GM12878 (cell line): ENCODE measurements at regions of chr7 and their contacts with region 1.

Region 1: DNA sequence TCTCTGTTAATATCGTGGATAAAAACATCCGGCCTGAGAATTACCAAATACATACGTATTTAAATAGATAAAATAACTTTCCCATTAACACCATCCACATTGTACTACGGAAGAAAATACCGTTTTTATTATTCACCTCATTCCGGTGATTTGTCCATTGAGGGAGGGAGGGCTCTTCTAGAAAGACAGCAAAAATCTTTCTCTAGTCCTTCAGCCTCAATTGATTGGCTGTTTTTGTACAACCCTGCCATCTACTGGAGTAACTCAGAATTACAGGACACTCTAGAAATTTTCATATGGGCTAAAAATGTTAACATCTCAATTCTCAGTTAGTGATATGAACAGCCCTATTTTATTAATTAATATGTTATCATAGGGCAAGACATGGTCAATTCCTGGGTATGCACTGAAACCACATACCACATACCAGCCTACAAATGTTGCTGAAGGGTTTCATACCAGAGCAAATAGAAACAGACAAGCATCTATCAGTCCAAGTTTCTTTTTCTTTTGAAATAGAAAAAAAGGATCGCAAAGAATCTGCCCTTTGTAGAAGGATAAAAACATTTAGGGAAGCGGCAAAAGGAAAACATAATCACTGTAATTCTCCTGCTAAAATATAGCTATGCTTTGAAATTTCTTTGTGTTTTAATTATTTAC is 55.8 kb upstream of the CDCA7L start:
- DNase-seq: peak; percentile 13
- ATAC-seq: peak; percentile 80
- H3K4me3 ChIP-seq: no peak overlapping the region
- H3K27ac ChIP-seq: no peak overlapping the region
- H3K4me1 ChIP-seq: no peaks in the 10 kb centered on the region
- H3K27me3 ChIP-seq: 0 out of 4 replicates have a peak, but pooled peaks cover 0 to 1% of the 10 kb centered on the region in 2 experiments
- CTCF ChIP-seq: peak; percentile 58 to 83 (median 70)
- EP300 ChIP-seq: no peak
- POLR2A ChIP-seq: no peak
- RAD21 ChIP-seq: peak; percentile 95

Region 2: DNA sequence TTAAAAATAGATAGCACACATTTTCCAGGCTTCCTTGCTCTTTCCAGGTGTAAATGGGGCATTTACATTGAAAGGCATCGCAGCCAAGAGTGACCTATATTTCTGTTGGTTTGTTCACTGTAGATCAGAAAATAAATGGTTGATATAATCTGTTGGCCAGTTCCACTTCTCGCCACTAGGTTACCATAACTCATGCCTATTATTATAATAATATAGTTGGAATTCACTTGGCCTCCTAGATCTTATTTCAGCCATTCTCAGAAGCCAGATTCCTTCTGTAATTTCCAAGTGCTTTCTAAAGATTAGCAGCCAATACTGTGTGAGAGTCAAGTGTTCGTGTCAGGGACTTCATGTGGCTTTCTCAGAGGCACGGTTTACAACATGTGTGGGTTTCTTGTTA is 279.1 kb before region 1 on chr7:
- CTCF ChIA-PET with region 1: no interaction called
- POLR2A ChIA-PET with region 1: no interaction called
- RAD21 ChIA-PET with region 1: no interaction called
- SMC1A ChIA-PET with region 1: no interaction called
- in situ Hi-C with region 1: no loop called
- intact Hi-C with region 1: loop called (anchors 5 kb)
- DNase-seq: no peak
- ATAC-seq: no peak
- H3K4me3 ChIP-seq: no peak overlapping the region
- H3K27ac ChIP-seq: no peak overlapping the region
- H3K4me1 ChIP-seq: no peaks in the 10 kb centered on the region
- H3K27me3 ChIP-seq: no peaks in the 10 kb centered on the region; a peak in 1 of 4 replicates
- CTCF ChIP-seq: peak in 2 of 3 experiments; percentile 20 to 28; a peak in 1 of 6 replicates
- EP300 ChIP-seq: no peak
- POLR2A ChIP-seq: no peak
- RAD21 ChIP-seq: no peak

Region 3: DNA sequence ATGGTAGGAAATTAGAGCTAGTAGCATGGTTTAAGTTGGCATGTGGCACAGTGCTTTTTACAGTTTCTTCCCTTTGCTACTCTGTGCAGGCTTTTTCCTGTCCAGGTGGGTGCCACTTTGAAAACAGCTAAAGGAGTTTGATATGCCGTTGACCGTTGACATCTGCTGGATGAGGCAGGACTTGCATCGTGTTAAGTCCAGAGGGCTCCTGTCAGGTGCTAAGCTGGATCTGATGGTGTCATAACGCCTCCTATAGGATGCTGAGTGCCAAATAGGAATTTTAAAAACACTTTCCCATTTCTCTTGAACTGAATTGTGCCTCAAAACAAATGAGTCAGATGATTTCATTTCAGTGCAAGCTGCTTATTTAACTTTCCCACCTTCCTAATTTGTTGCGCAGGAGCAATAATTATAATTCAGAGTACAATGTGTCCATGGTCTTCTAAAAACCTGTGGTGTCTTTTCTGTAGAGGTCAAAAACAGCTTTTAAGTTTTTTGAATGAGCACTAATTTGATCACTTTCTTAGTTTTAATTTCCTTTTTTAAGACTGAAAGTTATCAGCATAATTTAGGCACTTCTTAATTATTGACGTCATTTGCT is 234.1 kb before region 1 on chr7:
- CTCF ChIA-PET with region 1: interaction called, 3 read pairs
- POLR2A ChIA-PET with region 1: no interaction called
- RAD21 ChIA-PET with region 1: interaction called, 6 read pairs
- SMC1A ChIA-PET with region 1: interaction called, 6 read pairs
- in situ Hi-C with region 1: no loop called
- intact Hi-C with region 1: loop called (anchors 1 kb)
- DNase-seq: peak; percentile 26
- ATAC-seq: peak; percentile 91
- H3K4me3 ChIP-seq: no peak overlapping the region
- H3K27ac ChIP-seq: no peak overlapping the region
- H3K4me1 ChIP-seq: no peaks in the 10 kb centered on the region
- H3K27me3 ChIP-seq: 0 out of 4 replicates have a peak, but pooled peaks cover 0 to 2% of the 10 kb centered on the region in 2 experiments
- CTCF ChIP-seq: peak; percentile 59 to 81 (median 76); a peak in 5 of 6 replicates
- EP300 ChIP-seq: no peak
- POLR2A ChIP-seq: no peak
- RAD21 ChIP-seq: peak; percentile 92

Region 4: DNA sequence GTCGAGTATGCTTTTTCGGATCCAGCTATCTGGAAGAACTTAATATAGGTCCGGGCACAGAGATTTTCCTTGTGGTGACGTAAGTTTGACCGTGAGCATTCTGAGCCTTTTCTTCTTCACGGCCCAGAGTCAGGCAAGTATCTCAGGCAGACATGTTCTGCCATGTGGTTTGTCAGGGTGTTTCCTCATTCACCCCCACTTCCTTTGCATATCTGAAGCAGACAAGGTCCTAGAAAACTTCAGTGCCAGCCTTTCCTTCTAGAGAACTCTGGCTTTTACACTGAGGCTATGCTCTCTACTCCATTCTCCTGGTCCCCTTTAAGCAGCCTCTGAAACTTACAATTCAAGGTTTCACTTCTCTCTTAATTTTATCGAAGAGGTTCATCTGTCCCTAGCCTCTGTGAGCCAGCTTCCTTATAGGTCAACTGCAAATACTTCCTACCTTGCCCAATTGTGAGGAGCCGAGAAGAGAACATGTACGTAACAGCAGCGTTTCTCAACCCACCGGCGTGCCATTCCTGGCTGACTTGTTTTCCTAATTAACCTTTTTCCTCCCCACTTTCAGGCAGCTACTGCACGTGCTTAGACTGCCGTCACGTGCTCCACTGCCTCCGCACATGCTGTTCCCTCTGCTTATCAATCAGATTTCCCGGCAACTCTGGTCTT is 103.1 kb before region 1 on chr7:
- CTCF ChIA-PET with region 1: interaction called, 3 read pairs
- POLR2A ChIA-PET with region 1: no interaction called
- RAD21 ChIA-PET with region 1: no interaction called
- SMC1A ChIA-PET with region 1: no interaction called
- in situ Hi-C with region 1: no loop called
- intact Hi-C with region 1: loop called (anchors 5 kb)
- DNase-seq: peak; percentile 62
- ATAC-seq: peak; percentile 97
- H3K4me3 ChIP-seq: peak overlapping the region; percentile 17; the same call in 1 of the 2 replicates
- H3K27ac ChIP-seq: peak overlapping the region; percentile 46
- H3K4me1 ChIP-seq: peaks cover 9% of the 10 kb centered on the region
- H3K27me3 ChIP-seq: no peaks in the 10 kb centered on the region
- CTCF ChIP-seq: no peak
- EP300 ChIP-seq: 0 out of 4 replicates have a peak, but pooled peaks of 1 of the 2 experiments have one; percentile 26
- POLR2A ChIP-seq: peak; percentile 10; the same call in 1 of the 2 replicates
- RAD21 ChIP-seq: no peak

Region 5: DNA sequence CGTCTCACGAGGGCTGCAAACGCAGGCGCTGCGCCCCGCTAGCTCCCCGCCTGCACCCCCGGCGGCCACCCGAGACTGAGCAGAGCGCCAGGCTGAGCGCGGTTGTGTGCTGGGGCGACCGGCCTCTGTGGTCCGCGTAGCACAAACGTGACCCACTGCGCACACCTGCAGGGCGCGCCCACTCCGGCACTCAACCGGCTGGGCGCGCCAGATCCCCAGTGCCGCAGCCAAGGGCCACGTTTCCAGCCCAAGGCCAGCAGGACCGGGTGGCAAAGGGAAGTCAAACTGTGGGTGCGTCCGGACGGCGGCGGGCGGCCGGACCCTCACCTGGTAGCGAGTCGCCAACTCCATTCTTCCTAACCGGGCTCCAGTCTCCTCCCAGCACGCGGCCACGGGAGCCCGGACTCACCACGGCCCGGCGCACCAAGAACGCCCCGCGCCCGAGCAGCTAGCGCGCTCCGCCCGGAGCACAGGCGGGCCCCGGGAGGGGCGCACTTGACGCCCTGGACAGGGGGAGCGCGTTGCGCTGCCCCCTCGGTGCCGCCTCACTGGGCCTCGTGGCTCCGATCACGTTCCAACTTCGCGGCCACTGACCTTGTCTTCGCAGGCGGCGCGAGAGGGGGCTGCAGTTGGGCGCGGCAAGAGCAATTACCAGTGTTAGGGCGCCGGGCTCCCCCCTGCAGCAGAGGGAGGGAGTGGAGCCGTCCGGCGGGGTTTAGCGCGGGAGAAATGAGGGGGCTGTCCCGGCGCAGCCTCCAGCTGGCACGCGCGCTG is 55.8 kb before region 1 on chr7 and contains the start of gene CDCA7L:
- CTCF ChIA-PET with region 1: interaction called, 11 read pairs
- POLR2A ChIA-PET with region 1: no interaction called
- RAD21 ChIA-PET with region 1: interaction called, 5 read pairs
- SMC1A ChIA-PET with region 1: interaction called, 9 read pairs
- in situ Hi-C with region 1: no loop called
- intact Hi-C with region 1: loop called (anchors 2 kb)
- DNase-seq: peak; percentile 32
- ATAC-seq: peak; percentile 85
- H3K4me3 ChIP-seq: peak within 1 kb of the TSS; percentile 80
- H3K27ac ChIP-seq: peak within 1 kb of the TSS; percentile 85
- H3K4me1 ChIP-seq: peaks cover 44% of the 10 kb centered on the region
- H3K27me3 ChIP-seq: no peaks in the 10 kb centered on the region
- CTCF ChIP-seq: 0 out of 6 replicates have a peak, but pooled peaks of 1 of the 3 experiments have one; percentile 2
- EP300 ChIP-seq: no peak
- POLR2A ChIP-seq: peak; percentile 93
- RAD21 ChIP-seq: peak; percentile 20; the same call in 1 of the 2 replicates
- polyA plus RNA-seq, gene CDCA7L: 30.3 to 45.2 TPM

Region 6: GRCh38 chr7:22082886-22083703 is 81.6 kb after region 1 on chr7:
- CTCF ChIA-PET with region 1: interaction called, 8 read pairs
- POLR2A ChIA-PET with region 1: no interaction called
- RAD21 ChIA-PET with region 1: interaction called, 3 read pairs
- SMC1A ChIA-PET with region 1: no interaction called
- in situ Hi-C with region 1: no loop called
- intact Hi-C with region 1: loop called (anchors 5 kb)
- DNase-seq: peak; percentile 35
- ATAC-seq: peak; percentile 99
- H3K4me3 ChIP-seq: peak overlapping the region; percentile 64
- H3K27ac ChIP-seq: peak overlapping the region; percentile 42
- H3K4me1 ChIP-seq: peaks cover 6% of the 10 kb centered on the region; the same call in 1 of the 2 replicates
- H3K27me3 ChIP-seq: peaks cover 0 to 2% of the 10 kb centered on the region in 2 experiments; a peak in 2 of 4 replicates
- CTCF ChIP-seq: peak; percentile 94 to 97 (median 97)
- EP300 ChIP-seq: no peak
- POLR2A ChIP-seq: peak; percentile 58; the same call in 1 of the 2 replicates
- RAD21 ChIP-seq: peak; percentile 77

Region 7: DNA sequence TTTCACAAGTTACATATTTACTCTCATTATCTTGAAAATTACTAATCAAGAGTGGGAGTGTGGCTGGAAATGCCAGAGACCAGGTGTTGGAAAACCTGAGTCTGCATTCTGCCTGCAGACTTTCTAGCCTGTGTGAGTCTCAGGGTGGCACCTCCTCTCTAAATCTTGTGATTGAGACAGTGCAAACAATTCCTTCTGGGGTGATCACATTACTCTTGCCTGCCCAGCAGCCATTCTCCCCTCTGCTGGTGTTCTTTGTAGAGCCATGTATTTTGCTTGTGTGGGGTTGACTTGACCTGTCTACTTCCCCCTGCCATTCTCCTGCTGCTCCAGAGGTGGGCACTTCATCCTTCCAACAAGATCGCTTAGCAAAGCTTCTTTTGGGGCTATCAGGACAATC is 254.4 kb after region 1 on chr7:
- CTCF ChIA-PET with region 1: no interaction called
- POLR2A ChIA-PET with region 1: no interaction called
- RAD21 ChIA-PET with region 1: no interaction called
- SMC1A ChIA-PET with region 1: no interaction called
- in situ Hi-C with region 1: no loop called
- intact Hi-C with region 1: no loop called
- DNase-seq: no peak
- ATAC-seq: peak; percentile 44
- H3K4me3 ChIP-seq: no peak overlapping the region
- H3K27ac ChIP-seq: no peak overlapping the region
- H3K4me1 ChIP-seq: no peaks in the 10 kb centered on the region
- H3K27me3 ChIP-seq: no peaks in the 10 kb centered on the region
- CTCF ChIP-seq: no peak
- EP300 ChIP-seq: no peak
- POLR2A ChIP-seq: no peak
- RAD21 ChIP-seq: no peak

Region 8: GRCh38 chr7:22287412-22287811 is 285.9 kb after region 1 on chr7:
- CTCF ChIA-PET with region 1: no interaction called
- POLR2A ChIA-PET with region 1: no interaction called
- RAD21 ChIA-PET with region 1: no interaction called
- SMC1A ChIA-PET with region 1: no interaction called
- in situ Hi-C with region 1: no loop called
- intact Hi-C with region 1: no loop called
- DNase-seq: no peak
- ATAC-seq: no peak
- H3K4me3 ChIP-seq: no peak overlapping the region
- H3K27ac ChIP-seq: no peak overlapping the region
- H3K4me1 ChIP-seq: no peaks in the 10 kb centered on the region
- H3K27me3 ChIP-seq: no peaks in the 10 kb centered on the region
- CTCF ChIP-seq: no peak
- EP300 ChIP-seq: no peak
- POLR2A ChIP-seq: no peak
- RAD21 ChIP-seq: no peak